Activated B cell treated with CpG ODN at 0.5 μM for 24 hours (primary cell): ENCODE measurements at regions of chr1 and their contacts with region 1.

Region 1: DNA sequence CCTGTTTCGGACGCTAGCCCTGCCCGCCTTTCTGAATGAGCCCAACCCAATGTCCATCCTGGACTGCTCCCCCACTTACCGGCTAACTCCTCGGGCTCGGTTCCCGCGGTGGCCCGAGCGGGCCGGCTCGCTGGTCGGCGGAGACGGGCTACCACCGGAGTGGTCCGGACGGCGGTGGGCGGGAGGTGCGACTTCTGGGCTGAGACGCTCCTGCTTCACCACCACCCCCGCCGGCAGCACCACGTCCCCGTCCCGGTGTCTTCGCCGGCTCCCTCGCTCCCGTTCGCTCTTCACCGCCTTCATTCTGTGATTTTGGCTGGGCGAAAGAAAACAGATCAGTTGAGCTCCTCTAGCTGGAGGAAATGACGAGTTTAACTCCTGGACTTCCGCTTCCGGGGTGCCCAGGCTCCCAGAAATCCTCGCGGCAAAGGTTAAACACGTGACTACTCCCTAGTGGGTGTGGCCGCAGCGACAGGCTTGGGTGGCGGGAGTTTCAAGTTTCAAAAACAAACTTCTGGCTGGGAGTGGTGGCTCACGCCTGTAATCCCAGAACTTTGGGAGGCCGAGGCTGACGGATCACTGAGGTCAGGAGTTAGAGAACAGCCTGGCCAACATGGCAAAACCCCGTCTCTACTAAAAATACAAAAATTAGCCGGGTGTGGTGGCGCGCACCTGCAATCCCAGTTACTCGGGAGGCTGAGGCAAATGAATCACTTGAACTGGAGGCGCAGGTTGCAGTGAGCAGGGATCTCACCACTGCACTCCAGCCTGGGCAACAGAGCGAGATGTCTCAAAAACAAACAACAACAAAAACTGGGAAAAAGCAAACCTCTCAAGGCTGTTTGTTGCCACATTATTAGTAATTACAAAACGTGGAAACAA is at the start of gene SNIP1:
- DNase-seq: peak; percentile 84
- ATAC-seq: peak; percentile 98
- H3K4me3 Mint-ChIP-seq: peak within 1 kb of the TSS; percentile 96
- H3K27ac Mint-ChIP-seq: peak within 1 kb of the TSS; percentile 95
- H3K4me1 Mint-ChIP-seq: peaks cover 34% of the 10 kb centered on the region
- H3K27me3 Mint-ChIP-seq: peaks cover 9% of the 10 kb centered on the region
- CTCF ChIP-seq: no peak
- total RNA-seq, gene SNIP1: 34.7 and 35.7 TPM in 2 replicates

Region 2: GRCh38 chr1:37391211-37392011 is 162.8 kb before region 1 on chr1:
- CTCF ChIA-PET with region 1: no interaction called
- POLR2A ChIA-PET with region 1: no interaction called
- intact Hi-C with region 1: no loop called
- DNase-seq: no peak
- ATAC-seq: no peak
- H3K4me3 Mint-ChIP-seq: no peak overlapping the region
- H3K27ac Mint-ChIP-seq: no peak overlapping the region
- H3K4me1 Mint-ChIP-seq: no peaks in the 10 kb centered on the region
- H3K27me3 Mint-ChIP-seq: peaks cover 43% of the 10 kb centered on the region
- CTCF ChIP-seq: no peak

Region 3: DNA sequence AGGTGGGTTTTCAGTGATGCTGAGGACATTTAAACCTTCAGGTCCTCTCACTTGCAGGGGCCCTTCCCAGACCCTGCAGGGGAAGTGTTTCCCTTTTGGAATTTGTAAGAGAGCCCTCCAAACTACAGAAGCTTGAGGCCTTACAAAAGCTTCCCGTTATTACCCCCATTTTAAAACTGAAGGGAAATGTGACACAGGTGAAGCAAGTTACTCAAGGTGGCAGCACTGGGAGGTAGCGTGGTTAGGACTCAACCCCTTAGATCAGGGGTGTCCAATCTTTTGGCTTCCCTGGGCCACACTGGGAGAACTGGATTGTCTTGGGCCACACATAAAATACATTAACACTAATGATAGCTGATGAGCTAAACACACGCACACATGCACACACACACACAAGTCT is 95.6 kb before region 1 on chr1:
- CTCF ChIA-PET with region 1: no interaction called
- POLR2A ChIA-PET with region 1: interaction called, 8 read pairs
- intact Hi-C with region 1: loop called (anchors 5 kb)
- DNase-seq: no peak
- ATAC-seq: no peak
- H3K4me3 Mint-ChIP-seq: no peak overlapping the region
- H3K27ac Mint-ChIP-seq: no peak overlapping the region
- H3K4me1 Mint-ChIP-seq: peaks cover 5% of the 10 kb centered on the region
- H3K27me3 Mint-ChIP-seq: no peaks in the 10 kb centered on the region
- CTCF ChIP-seq: no peak

Region 4: GRCh38 chr1:37514350-37515184 is 39.6 kb before region 1 on chr1 and contains the start of gene MEAF6:
- CTCF ChIA-PET with region 1: interaction called, 5 read pairs
- POLR2A ChIA-PET with region 1: interaction called, 8 read pairs
- intact Hi-C with region 1: loop called (anchors 1 kb)
- DNase-seq: peak; percentile 93
- ATAC-seq: peak; percentile 95
- H3K4me3 Mint-ChIP-seq: peak within 1 kb of the TSS; percentile 96
- H3K27ac Mint-ChIP-seq: peak within 1 kb of the TSS; percentile 98
- H3K4me1 Mint-ChIP-seq: peaks cover 39% of the 10 kb centered on the region
- H3K27me3 Mint-ChIP-seq: no peaks in the 10 kb centered on the region
- CTCF ChIP-seq: no peak
- total RNA-seq, gene MEAF6: 59.9 and 66.5 TPM in 2 replicates

Region 5: GRCh38 chr1:37602750-37603694 is 48.9 kb after region 1 on chr1:
- CTCF ChIA-PET with region 1: no interaction called
- POLR2A ChIA-PET with region 1: no interaction called
- intact Hi-C with region 1: no loop called
- DNase-seq: no peak
- ATAC-seq: peak; percentile 82
- H3K4me3 Mint-ChIP-seq: no peak overlapping the region
- H3K27ac Mint-ChIP-seq: no peak overlapping the region
- H3K4me1 Mint-ChIP-seq: peaks cover 4% of the 10 kb centered on the region
- H3K27me3 Mint-ChIP-seq: peaks cover 20% of the 10 kb centered on the region
- CTCF ChIP-seq: no peak